ENCODE measurements at regions of chr9 and their contacts with region 1.

Region 1: DNA sequence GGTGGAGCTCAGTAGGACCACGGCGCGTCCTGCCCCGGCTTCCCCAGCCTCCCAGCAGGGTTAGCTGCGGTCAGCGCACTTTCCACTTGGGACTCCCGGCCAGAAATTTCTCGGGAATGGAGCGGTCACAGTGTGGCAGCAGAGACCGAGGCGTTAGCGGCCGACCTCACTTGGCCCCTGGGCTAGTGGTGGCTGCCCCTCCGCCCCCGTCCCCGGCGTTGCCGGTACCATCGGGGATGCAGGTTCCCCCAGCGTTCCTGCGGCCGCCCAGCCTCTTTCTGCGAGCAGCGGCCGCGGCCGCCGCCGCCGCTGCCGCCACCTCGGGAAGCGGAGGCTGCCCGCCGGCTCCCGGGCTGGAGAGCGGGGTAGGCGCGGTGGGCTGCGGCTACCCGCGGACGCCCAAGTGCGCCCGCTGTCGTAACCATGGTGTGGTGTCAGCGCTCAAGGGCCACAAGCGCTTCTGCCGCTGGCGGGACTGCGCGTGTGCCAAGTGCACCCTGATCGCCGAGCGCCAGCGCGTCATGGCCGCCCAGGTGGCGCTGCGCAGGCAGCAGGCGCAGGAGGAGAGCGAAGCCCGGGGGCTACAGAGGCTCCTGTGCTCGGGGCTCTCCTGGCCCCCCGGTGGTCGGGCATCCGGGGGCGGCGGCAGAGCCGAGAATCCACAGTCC is 460 bp downstream of the DMRTA1 start:
- DNase-seq: no peak

Region 2: GRCh38 chr9:22307013-22307711 is 139.9 kb before region 1 on chr9:
- intact Hi-C with region 1: loop called (anchors 2 kb)
- DNase-seq: no peak